ENCODE measurements at regions of chr6 and their contacts with region 1.

Region 1: GRCh38 chr6:33771146-33772081 is 17.5 kb downstream of the LEMD2 start:
- DNase-seq: peak; percentile 92
- H3K4me3 ChIP-seq: no peak overlapping the region
- H3K27ac ChIP-seq: peak overlapping the region in 7 of 8 donors; percentile 61 to 71 (median 64)
- H3K4me1 ChIP-seq: peaks cover 3 to 47% (median 24%) of the 10 kb centered on the region in 6 donors
- H3K27me3 ChIP-seq: peaks cover 0 to 27% (median 0%) of the 10 kb centered on the region in 7 donors
- CTCF ChIP-seq: peak; percentile 72 to 99 (median 95)
- POLR2A ChIP-seq: peak in 1 of 3 donors; percentile 19

Region 2: DNA sequence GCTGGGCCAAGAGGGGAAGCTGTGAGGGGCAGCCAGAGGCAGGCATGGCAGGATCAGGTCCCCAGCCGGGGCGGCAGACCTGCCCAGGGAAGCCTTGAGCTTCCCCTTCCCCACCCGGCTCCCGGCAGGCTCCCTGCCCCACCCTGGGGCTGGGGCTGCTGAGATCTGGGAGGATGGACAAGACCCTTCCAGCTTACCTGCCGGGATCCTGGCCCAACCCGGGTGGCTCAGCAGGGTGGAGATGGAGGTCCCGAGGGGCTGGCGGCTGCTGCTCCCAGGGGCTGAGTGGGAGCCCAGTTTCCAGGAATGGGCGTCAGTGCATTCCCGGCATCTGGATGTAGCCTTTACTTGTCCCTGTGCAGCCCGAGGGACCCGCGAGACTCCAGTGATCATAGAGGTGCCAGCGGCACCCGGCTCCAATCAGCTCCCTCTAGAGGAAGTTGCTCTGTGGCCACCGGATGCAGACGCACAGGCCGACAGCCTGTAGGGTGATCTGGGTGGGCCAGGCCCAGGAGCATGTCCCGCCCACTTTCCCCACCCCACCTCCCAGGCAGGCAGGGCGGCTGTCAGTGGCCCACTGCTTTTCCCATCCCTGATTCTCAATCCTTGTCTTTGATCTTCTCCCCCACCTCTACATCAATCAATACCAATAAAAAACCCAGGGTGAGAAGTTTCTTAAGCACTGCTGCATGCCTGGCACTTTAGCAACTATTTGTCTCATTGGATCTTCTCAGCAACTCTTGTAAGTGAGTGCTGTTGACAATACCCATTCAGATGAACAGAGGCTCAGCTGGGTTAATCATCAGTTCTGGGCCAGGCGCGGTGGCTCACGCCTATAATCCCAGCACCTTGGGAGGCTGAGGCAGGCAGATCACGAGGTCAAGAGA is 191.3 kb before region 1 on chr6 and contains the start of gene BAK1:
- intact Hi-C with region 1: no loop called
- DNase-seq: peak; percentile 99
- H3K4me3 ChIP-seq: peak within 1 kb of the TSS; percentile 79 to 96 (median 92)
- H3K27ac ChIP-seq: peak within 1 kb of the TSS; percentile 84 to 97 (median 92)
- H3K4me1 ChIP-seq: peaks cover 16 to 64% (median 46%) of the 10 kb centered on the region in 6 donors
- H3K27me3 ChIP-seq: no peaks in the 10 kb centered on the region
- CTCF ChIP-seq: peak; percentile 27 to 79 (median 60)
- POLR2A ChIP-seq: peak in 2 of 3 donors; percentile 21 to 76
- total RNA-seq, gene BAK1: 22.6 to 34.4 (median 28.3) TPM

Region 3: GRCh38 chr6:34027445-34027936 is 256.1 kb after region 1 on chr6:
- intact Hi-C with region 1: loop called (anchors 2 kb)
- DNase-seq: peak; percentile 85
- H3K4me3 ChIP-seq: no peak overlapping the region
- H3K27ac ChIP-seq: no peak overlapping the region
- H3K4me1 ChIP-seq: no peaks in the 10 kb centered on the region
- H3K27me3 ChIP-seq: peaks cover 0 to 34% (median 0%) of the 10 kb centered on the region in 7 donors
- CTCF ChIP-seq: peak; percentile 58 to 91 (median 84)
- POLR2A ChIP-seq: no peak

Measured in spleen (tissue), 13 donors.